ENCODE measurements at regions of chr11 and their contacts with region 1.

Region 1: DNA sequence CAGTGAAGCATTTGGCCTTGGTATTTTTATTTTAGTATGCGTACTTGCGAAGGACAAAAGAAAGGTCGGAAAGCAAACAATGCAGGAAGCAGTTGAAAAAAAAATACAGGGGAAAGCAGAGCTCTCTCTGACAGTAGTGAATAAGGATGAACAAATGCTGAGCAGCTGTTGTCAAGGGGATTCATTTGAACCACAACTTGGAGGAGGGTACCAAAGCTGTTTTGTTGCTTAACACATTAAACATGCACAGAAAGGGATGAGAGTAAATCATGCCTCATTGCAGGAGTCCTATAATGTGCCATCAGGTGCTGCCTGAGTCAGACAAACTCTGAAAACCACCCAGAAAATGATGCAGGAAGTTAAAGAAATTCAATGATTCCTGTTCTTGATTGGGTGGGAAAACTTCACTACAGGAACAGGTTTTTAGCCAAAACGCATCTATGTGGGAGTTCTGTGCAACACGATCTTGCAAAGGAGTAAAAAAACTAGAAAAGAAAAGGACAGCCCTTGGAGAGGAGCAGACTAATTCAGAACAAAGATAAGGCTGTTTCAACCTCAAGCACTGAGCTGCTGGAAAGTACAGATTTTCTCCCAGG is 2113.5 kb downstream of the LRRC4C start:
- DNase-seq: peak in 1 of 10 donors; percentile 19
- H3K4me3 ChIP-seq: no peak overlapping the region
- H3K27ac ChIP-seq: peak overlapping the region in 11 of 59 donors; percentile 19 to 62 (median 40)
- H3K27me3 ChIP-seq: no peaks in the 10 kb centered on the region
- CTCF ChIP-seq: no peak

Region 2: DNA sequence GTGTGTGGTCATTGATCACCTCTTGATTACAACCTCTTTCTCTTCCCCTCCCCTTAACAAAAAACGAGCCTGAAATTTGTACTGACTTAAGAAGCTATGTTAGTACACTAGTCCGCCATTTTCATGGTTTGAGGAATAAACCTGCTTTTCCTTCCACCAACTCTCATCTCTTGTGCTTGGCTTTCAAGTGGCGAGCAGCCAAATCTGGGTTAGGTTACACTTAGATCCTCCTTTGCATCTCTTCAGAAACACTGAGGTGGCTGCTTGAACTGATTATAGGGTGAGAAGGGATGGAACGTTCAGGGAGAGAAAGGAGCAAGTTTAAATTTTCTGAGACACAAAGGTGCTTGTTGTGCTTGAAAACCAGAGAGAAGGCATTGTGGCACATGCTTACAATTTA is 57.9 kb before region 1 on chr11:
- intact Hi-C with region 1: no loop called
- DNase-seq: peak in 1 of 10 donors; percentile 16
- H3K4me3 ChIP-seq: no peak overlapping the region
- H3K27ac ChIP-seq: peak overlapping the region in 8 of 59 donors; percentile 2 to 62 (median 18)
- H3K27me3 ChIP-seq: no peaks in the 10 kb centered on the region
- CTCF ChIP-seq: no peak

Region 3: GRCh38 chr11:39425226-39425625 is 79.3 kb after region 1 on chr11:
- intact Hi-C with region 1: no loop called
- DNase-seq: no peak
- H3K4me3 ChIP-seq: no peak overlapping the region
- H3K27ac ChIP-seq: no peak overlapping the region
- H3K27me3 ChIP-seq: no peaks in the 10 kb centered on the region
- CTCF ChIP-seq: no peak

Region 4: GRCh38 chr11:40054631-40055030 is 708.7 kb after region 1 on chr11:
- intact Hi-C with region 1: loop called in 1 of 2 experiments (anchors 5 kb)
- DNase-seq: no peak
- H3K4me3 ChIP-seq: no peak overlapping the region
- H3K27ac ChIP-seq: peak overlapping the region in 1 of 59 donors; percentile 11
- H3K27me3 ChIP-seq: no peaks in the 10 kb centered on the region
- CTCF ChIP-seq: no peak